ENCODE measurements at regions of chr1 and their contacts with region 1.

Region 1: DNA sequence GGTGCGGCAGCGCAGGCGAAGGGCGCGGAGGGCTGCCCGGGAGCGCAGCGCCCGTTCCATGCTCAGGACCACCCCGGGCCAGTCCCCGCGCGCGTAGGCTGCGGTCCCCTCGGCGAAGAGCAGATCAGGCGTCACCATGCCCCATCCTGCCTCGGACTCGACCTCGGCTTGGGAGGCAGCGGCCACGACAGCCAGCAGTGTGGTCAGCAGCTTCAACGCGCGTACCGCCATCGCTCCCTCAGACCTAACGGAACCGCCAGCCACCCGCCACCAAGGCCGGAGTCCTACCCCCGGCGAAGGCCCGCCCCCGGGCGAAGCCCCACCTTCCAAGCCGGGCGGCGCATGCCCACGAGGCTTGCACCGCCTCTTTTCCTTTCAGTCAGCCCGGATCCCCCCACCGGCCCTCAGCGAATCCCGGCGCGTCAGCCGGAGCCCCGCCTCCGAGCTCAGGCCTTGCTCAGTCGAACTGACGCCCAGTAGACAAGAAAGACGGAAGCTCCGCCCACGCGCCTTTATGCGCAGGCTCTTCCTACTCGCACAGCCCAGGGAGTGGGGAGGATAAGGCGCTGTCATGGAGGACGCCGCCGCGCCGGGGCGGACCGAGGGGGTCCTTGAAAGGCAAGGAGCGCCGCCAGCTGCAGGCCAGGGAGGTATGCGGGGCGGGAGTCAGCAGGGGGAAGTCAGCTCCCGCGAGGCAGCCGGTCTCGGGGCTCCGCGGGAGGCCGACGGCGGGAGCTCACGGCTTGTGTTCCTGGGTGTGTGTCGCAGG is at the starts of genes C1orf50 and P3H1:
- DNase-seq: peak; percentile 100
- H3K4me3 Mint-ChIP-seq: no peak within 1 kb of the TSS
- H3K27ac Mint-ChIP-seq: peak within 1 kb of the TSS; percentile 93
- H3K4me1 Mint-ChIP-seq: peaks cover 25% of the 10 kb centered on the region
- H3K27me3 Mint-ChIP-seq: no peaks in the 10 kb centered on the region
- total RNA-seq, gene C1orf50: 6.2 and 6.3 TPM in 2 replicates
- total RNA-seq, gene P3H1: 47.4 and 51.1 TPM in 2 replicates

Region 2: DNA sequence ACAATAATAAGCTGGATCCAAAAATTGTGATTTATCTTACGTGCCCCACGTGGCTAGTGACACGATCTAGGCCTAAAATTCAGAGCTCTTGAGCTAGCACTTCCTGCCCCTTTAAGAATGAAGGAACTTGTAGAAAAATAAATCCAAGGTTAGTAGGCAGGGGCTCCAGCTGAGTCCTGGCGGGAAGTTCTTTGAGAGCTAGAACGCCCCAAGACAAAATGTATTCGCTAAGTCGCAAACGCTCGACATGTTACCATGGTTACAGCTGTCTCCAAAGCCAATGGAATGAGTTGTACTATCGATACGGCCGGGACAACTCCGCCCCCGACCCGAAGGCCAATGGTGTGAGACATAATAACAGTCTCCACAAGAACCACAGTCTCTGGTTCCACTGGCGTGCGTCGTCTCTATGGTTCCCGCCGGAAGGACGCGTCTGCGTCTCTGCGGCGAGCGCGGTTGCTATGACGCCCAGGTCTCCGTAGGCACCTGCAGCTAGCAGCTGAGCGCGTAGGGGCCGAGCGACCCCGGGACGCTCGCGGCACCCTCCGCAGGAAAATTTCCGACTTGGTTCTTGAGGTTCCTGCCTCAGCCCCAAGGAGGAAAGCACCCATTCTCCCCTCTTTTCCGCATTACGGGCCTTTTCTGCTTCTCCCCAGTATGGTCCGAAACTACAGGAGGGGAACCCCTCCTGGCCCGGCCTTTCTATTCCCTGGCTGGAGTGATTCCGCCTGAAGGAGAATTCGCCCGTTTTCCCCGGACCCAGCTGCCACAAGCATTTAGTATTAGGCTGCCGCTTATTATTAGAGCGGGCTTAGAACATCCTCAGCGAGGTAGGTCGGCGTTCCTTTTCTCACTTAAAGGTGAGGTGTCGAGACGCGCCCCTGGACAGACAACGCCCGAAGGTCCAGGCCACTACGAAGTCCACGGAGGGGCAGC is 303.8 kb before region 1 on chr1 and contains the start of gene CCDC30:
- intact Hi-C with region 1: loop called (anchors 2 kb)
- DNase-seq: peak; percentile 99
- H3K4me3 Mint-ChIP-seq: peak within 1 kb of the TSS; percentile 85
- H3K27ac Mint-ChIP-seq: peak within 1 kb of the TSS; percentile 78
- H3K4me1 Mint-ChIP-seq: peaks cover 19% of the 10 kb centered on the region
- H3K27me3 Mint-ChIP-seq: peaks cover 10% of the 10 kb centered on the region
- total RNA-seq, gene CCDC30: 0.68 and 1.1 TPM in 2 replicates

Region 3: DNA sequence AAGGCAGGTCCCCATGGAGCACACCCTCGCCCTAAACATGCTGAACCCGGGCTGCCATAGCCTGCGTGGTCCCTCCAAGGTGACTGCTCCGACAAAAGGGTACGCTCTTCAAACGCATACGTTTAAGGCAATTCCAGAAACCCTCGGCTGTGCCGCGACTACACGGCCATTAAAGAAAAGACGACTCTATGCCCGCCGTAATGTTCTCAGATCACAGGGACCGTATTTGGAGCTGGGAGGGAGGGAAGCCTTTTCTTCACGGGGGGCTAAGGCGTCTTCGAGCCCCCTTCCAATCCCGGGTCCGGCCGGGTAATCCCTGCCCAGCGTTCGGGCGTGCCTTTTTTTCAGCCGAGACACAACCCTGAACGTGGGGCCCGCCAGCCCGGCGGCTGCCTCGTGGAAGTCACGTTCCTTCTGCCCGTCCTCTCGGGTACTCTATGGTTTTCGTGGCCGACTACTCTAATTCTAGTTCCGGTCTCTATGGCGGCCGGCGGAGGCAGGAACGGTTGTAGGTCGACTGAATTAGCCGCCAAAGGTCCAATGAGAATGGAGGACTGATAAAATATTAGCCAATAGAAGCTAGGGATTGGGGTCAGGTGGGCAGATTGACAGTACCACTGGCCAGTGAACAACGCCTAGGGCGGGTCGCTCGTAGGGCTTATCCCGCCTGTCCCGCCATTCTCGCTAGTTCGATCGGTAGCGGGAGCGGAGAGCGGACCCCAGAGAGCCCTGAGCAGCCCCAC is 85.0 kb before region 1 on chr1 and contains the start of gene YBX1:
- intact Hi-C with region 1: loop called (anchors 1 kb)
- DNase-seq: peak; percentile 98
- H3K4me3 Mint-ChIP-seq: peak within 1 kb of the TSS; percentile 94
- H3K27ac Mint-ChIP-seq: peak within 1 kb of the TSS; percentile 98
- H3K4me1 Mint-ChIP-seq: peaks cover 50% of the 10 kb centered on the region
- H3K27me3 Mint-ChIP-seq: no peaks in the 10 kb centered on the region
- total RNA-seq, gene YBX1: 861 and 867 TPM in 2 replicates

Region 4: GRCh38 chr1:42777852-42778251 is 10.9 kb after region 1 on chr1:
- intact Hi-C with region 1: no loop called
- DNase-seq: peak; percentile 83
- H3K4me3 Mint-ChIP-seq: no peak overlapping the region
- H3K27ac Mint-ChIP-seq: no peak overlapping the region
- H3K4me1 Mint-ChIP-seq: peaks cover 27% of the 10 kb centered on the region
- H3K27me3 Mint-ChIP-seq: no peaks in the 10 kb centered on the region

Region 5: DNA sequence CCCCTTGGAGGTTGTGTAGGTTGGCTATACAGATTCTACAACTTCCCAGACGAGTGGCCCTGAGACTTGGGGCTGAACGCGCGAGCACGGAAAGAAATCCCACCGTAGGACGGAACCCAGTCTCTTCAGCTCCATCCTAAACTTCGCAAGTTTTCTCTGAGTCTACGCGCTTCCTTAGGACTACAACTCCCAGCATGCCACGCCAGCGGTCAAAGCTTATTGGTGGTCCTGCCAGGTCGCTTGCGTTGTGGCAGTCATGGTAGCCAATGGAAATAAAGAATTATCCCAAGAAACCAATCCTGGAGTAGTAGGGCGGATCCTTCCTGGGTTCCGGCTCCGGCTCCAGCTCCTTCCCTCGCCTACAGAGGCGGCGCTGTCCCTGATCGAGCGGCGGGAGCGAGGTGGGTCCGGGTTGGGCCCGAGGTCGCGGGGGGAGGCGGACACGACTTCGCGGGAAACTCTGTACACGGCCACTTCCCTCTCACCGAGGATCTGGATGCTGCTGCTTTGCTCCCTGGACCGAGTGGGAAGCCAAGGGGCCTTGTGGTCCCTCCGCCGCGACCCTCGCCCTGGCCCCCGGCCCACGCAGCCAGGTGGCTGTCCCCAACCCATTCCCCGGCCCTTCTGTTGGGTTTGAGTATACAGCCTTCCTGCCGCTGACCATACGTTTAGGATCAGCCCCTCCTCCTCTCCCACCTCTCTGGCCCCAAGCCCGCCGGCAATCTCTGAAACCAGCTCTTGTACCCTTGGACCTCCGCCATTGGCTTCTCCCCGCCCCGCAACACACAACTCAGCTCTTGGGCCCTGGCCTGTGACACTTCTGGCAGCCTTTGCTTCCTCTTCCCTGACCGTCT is 79.6 kb after region 1 on chr1 and contains the start of gene ZNF691:
- intact Hi-C with region 1: loop called (anchors 1 kb)
- DNase-seq: peak; percentile 96
- H3K4me3 Mint-ChIP-seq: peak within 1 kb of the TSS; percentile 96
- H3K27ac Mint-ChIP-seq: peak within 1 kb of the TSS; percentile 84
- H3K4me1 Mint-ChIP-seq: peaks cover 31% of the 10 kb centered on the region
- H3K27me3 Mint-ChIP-seq: no peaks in the 10 kb centered on the region
- total RNA-seq, gene ZNF691: 9.9 and 11.1 TPM in 2 replicates